ENCODE measurements at regions of chr2 and their contacts with region 1.

Region 1: DNA sequence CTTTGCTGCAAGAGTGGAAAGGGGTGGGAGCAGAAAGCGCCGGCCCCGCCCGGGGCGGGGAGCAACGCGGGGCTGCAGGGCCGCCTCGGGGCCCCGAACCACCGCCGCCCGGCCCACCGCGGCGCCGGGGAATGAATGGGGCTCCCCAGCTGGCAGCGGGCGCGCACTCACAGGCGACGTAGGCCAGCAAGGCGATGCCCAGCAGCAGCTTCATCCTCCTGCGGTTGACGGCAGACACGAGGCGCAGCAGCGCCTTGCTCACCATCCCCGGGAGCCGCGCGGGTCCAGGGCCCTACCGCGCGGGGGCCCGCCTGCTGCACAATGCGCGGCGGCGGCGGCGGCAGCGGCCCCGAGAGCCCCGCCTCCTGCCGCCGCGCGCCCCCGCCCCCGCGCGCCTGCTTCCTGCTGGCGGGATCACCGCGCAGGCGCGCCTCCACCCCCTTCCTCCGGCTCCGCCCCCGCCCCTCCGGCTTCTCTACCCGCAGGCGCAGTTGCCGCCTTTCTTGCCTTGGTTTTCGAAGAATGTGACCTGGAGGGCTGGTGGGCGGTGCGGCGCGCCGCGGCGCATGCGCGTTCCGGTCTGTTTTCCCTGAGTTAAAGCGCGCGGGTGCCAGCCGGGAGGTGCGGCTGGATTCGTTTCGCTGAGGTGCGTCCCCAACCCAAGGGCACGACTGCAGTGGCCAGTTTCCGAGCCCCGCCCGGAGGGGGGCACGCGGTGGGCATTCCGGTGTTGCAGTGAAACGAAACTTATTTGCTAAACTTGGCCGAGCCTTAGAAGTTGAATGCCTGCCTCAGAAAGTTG is at the start of gene UXS1:
- DNase-seq: peak; percentile 98 to 99 (median 99)
- ATAC-seq: peak; percentile 87
- H3K4me3 ChIP-seq: peak within 1 kb of the TSS; percentile 97
- H3K27ac ChIP-seq: peak within 1 kb of the TSS; percentile 81
- H3K4me1 ChIP-seq: peaks cover 23 to 26% of the 10 kb centered on the region in 2 experiments; a peak in 4 of 5 replicates
- H3K27me3 ChIP-seq: no peaks in the 10 kb centered on the region
- CTCF ChIP-seq: 0 out of 6 replicates have a peak, but pooled peaks of 1 of the 3 experiments have one; percentile 3
- EP300 ChIP-seq: no peak
- POLR2A ChIP-seq: peak; percentile 85
- RAD21 ChIP-seq: peak in 1 of 2 experiments; percentile 6; a peak in 1 of 4 replicates
- polyA plus RNA-seq, gene UXS1: 5.8 to 11.3 TPM

Region 2: GRCh38 chr2:106115250-106115649 is 78.9 kb before region 1 on chr2:
- CTCF ChIA-PET with region 1: no interaction called
- POLR2A ChIA-PET with region 1: no interaction called
- in situ Hi-C with region 1: no loop called
- intact Hi-C with region 1: loop called (anchors 5 kb)
- DNase-seq: peak; percentile 67 to 89 (median 78)
- ATAC-seq: peak; percentile 99
- H3K4me3 ChIP-seq: no peak overlapping the region
- H3K27ac ChIP-seq: peak overlapping the region; percentile 78; the same call in 2 of the 3 replicates
- H3K4me1 ChIP-seq: peaks cover 13 to 25% of the 10 kb centered on the region in 2 experiments; a peak in 4 of 5 replicates
- H3K27me3 ChIP-seq: no peaks in the 10 kb centered on the region
- CTCF ChIP-seq: no peak
- EP300 ChIP-seq: no peak; the same call in 1 of the 2 replicates
- POLR2A ChIP-seq: no peak
- RAD21 ChIP-seq: peak; percentile 8 to 24; a peak in 1 of 4 replicates